K562 (cell line): ENCODE measurements at regions of chr2 and their contacts with region 1.

Region 1: GRCh38 chr2:223970343-223971128 is 13.3 kb downstream of the MRPL44 start:
- DNase-seq: peak in 3 of 4 experiments; percentile 14 to 58 (median 18)
- ATAC-seq: peak; percentile 80
- H3K4me3 ChIP-seq: no peak overlapping the region
- H3K27ac ChIP-seq: no peak overlapping the region
- H3K4me1 ChIP-seq: no peaks in the 10 kb centered on the region
- H3K27me3 ChIP-seq: no peaks in the 10 kb centered on the region
- CTCF ChIP-seq: peak; percentile 45 to 78 (median 70); a peak in 5 of 6 replicates
- EP300 ChIP-seq: no peak
- POLR2A ChIP-seq: no peak
- RAD21 ChIP-seq: peak; percentile 88 to 89

Region 2: DNA sequence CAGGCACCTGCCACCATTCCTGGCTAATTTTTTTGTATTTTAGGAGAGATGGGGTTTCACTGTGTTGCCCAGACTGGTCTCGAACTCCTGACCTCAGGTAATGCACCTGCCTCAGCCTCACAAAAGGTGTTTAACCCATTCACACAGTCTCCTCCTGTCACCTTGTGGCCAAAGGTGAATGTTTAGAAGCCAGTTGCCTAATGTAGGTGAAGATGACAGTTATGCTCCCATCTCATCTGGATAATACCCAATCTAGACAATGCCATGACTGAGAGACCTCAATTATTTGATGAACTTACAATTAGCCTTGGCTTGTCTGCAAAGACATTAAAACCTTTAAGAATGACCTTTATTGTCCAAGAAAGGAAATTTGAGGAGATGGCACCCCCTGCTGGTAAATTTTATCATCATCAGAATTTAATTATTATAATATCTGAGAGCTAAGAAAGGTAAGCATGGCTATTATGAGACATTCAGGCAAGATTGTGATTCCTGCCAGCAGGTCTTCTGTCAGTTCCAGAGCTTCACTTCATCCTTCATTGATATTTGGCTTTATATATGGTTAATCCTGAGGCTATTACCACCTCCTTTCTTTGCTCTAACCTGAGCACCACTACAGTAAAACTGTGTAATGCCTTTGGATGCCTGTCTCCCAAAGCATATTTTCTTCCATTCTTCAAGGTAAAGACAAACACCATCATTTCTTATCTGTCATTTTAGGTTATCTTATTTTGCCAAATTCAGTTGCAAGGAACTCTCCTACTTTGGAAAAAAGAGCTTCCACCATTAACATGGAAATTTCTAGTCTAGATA is 313.8 kb after region 1 on chr2:
- CTCF ChIA-PET with region 1: interaction called, 41 read pairs
- POLR2A ChIA-PET with region 1: interaction called, 6 read pairs
- in situ Hi-C with region 1: no loop called
- intact Hi-C with region 1: loop called (anchors 1 kb)
- DNase-seq: peak; percentile 3 to 15 (median 8)
- ATAC-seq: peak; percentile 67; the same call in 2 of the 3 replicates
- H3K4me3 ChIP-seq: no peak overlapping the region
- H3K27ac ChIP-seq: no peak overlapping the region
- H3K4me1 ChIP-seq: no peaks in the 10 kb centered on the region
- H3K27me3 ChIP-seq: 0 out of 5 replicates have a peak, but pooled peaks cover 0 to 2% of the 10 kb centered on the region in 2 experiments
- CTCF ChIP-seq: peak; percentile 40 to 53 (median 44); a peak in 5 of 6 replicates
- EP300 ChIP-seq: no peak
- POLR2A ChIP-seq: no peak
- RAD21 ChIP-seq: peak; percentile 92 to 93

Region 3: GRCh38 chr2:224650815-224651439 is 680.4 kb after region 1 on chr2:
- CTCF ChIA-PET with region 1: interaction called, 6 read pairs
- POLR2A ChIA-PET with region 1: no interaction called
- in situ Hi-C with region 1: no loop called
- intact Hi-C with region 1: loop called (anchors 5 kb)
- DNase-seq: peak; percentile 28 to 53 (median 33)
- ATAC-seq: peak; percentile 88
- H3K4me3 ChIP-seq: no peak overlapping the region
- H3K27ac ChIP-seq: no peak overlapping the region
- H3K4me1 ChIP-seq: no peaks in the 10 kb centered on the region; a peak in 1 of 5 replicates
- H3K27me3 ChIP-seq: no peaks in the 10 kb centered on the region
- CTCF ChIP-seq: peak; percentile 46 to 72 (median 63); a peak in 5 of 6 replicates
- EP300 ChIP-seq: no peak
- POLR2A ChIP-seq: no peak
- RAD21 ChIP-seq: peak; percentile 69 to 80

Region 4: GRCh38 chr2:224778474-224778877 is 807.9 kb after region 1 on chr2:
- CTCF ChIA-PET with region 1: interaction called, 5 read pairs
- POLR2A ChIA-PET with region 1: no interaction called
- in situ Hi-C with region 1: no loop called
- intact Hi-C with region 1: loop called (anchors 5 kb)
- DNase-seq: peak; percentile 22 to 47 (median 26)
- ATAC-seq: peak; percentile 48; the same call in 1 of the 3 replicates
- H3K4me3 ChIP-seq: no peak overlapping the region
- H3K27ac ChIP-seq: no peak overlapping the region
- H3K4me1 ChIP-seq: no peaks in the 10 kb centered on the region
- H3K27me3 ChIP-seq: no peaks in the 10 kb centered on the region
- CTCF ChIP-seq: peak; percentile 35 to 68 (median 48); a peak in 4 of 6 replicates
- EP300 ChIP-seq: no peak
- POLR2A ChIP-seq: no peak
- RAD21 ChIP-seq: peak; percentile 33 to 66; a peak in 3 of 4 replicates

Region 5: DNA sequence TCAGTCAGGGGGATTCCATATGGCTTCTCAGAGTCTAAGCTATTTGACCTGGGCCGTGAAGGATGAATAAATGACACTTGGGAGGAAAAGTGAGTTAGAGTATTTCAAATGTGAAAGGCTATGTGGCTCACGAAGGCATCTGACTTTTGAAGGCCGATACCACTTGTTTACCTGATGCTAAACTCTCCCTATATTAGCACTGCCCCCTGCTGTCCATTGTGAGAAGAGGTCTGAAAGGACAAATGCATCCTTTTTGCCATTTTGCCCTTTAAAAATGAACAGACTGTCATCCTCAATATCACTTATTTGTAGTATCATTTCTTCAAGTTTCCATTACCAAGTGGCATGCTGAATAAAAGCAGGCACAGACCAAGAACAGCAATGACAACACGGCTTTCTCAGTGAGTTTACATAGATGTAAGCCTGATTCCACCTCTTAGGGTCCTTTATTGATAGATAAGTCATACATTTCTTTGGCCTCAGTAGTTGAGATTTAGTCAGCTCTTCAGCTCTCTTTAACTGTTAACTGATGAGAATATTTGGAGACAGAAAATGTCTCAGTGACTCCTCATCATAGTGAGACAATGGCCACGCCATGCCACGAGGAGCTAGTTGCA is 1031.6 kb after region 1 on chr2:
- CTCF ChIA-PET with region 1: no interaction called
- POLR2A ChIA-PET with region 1: no interaction called
- in situ Hi-C with region 1: no loop called
- intact Hi-C with region 1: loop called (anchors 10 kb)
- DNase-seq: peak; percentile 5 to 40 (median 20)
- ATAC-seq: no peak
- H3K4me3 ChIP-seq: no peak overlapping the region
- H3K27ac ChIP-seq: no peak overlapping the region
- H3K4me1 ChIP-seq: no peaks in the 10 kb centered on the region
- H3K27me3 ChIP-seq: no peaks in the 10 kb centered on the region
- CTCF ChIP-seq: peak in 2 of 3 experiments; percentile 37 to 50; a peak in 3 of 6 replicates
- EP300 ChIP-seq: no peak
- POLR2A ChIP-seq: no peak
- RAD21 ChIP-seq: peak; percentile 41 to 69; a peak in 3 of 4 replicates